Activated naive CD4-positive, alpha-beta T cell treated with anti-CD3 and anti-CD28 coated beads for 36 hours (primary cell): ENCODE measurements at regions of chr4 and their contacts with region 1.

Region 1: GRCh38 chr4:108030332-108030731 is 40.6 kb downstream of the HADH start:
- DNase-seq: peak; percentile 92
- H3K4me3 Mint-ChIP-seq: peak overlapping the region; percentile 52
- H3K27ac Mint-ChIP-seq: peak overlapping the region; percentile 97
- H3K4me1 Mint-ChIP-seq: peaks cover 70% of the 10 kb centered on the region
- H3K27me3 Mint-ChIP-seq: no peaks in the 10 kb centered on the region

Region 2: GRCh38 chr4:108053251-108053711 is 22.9 kb after region 1 on chr4:
- CTCF ChIA-PET with region 1: interaction called, 16 read pairs
- intact Hi-C with region 1: loop called (anchors 1 kb)
- DNase-seq: no peak
- H3K4me3 Mint-ChIP-seq: peak overlapping the region; percentile 34
- H3K27ac Mint-ChIP-seq: peak overlapping the region; percentile 93
- H3K4me1 Mint-ChIP-seq: peaks cover 94% of the 10 kb centered on the region
- H3K27me3 Mint-ChIP-seq: no peaks in the 10 kb centered on the region

Region 3: GRCh38 chr4:108109997-108110416 is 79.7 kb after region 1 on chr4:
- CTCF ChIA-PET with region 1: interaction called, 12 read pairs
- intact Hi-C with region 1: loop called (anchors 1 kb)
- DNase-seq: no peak
- H3K4me3 Mint-ChIP-seq: peak overlapping the region; percentile 55
- H3K27ac Mint-ChIP-seq: peak overlapping the region; percentile 96
- H3K4me1 Mint-ChIP-seq: peaks cover 96% of the 10 kb centered on the region
- H3K27me3 Mint-ChIP-seq: no peaks in the 10 kb centered on the region

Region 4: GRCh38 chr4:108160741-108161352 is 130.5 kb after region 1 on chr4:
- CTCF ChIA-PET with region 1: interaction called, 10 read pairs
- intact Hi-C with region 1: loop called (anchors 1 kb)
- DNase-seq: no peak
- H3K4me3 Mint-ChIP-seq: peak overlapping the region; percentile 57
- H3K27ac Mint-ChIP-seq: peak overlapping the region; percentile 97
- H3K4me1 Mint-ChIP-seq: peaks cover 58% of the 10 kb centered on the region
- H3K27me3 Mint-ChIP-seq: no peaks in the 10 kb centered on the region

Region 5: DNA sequence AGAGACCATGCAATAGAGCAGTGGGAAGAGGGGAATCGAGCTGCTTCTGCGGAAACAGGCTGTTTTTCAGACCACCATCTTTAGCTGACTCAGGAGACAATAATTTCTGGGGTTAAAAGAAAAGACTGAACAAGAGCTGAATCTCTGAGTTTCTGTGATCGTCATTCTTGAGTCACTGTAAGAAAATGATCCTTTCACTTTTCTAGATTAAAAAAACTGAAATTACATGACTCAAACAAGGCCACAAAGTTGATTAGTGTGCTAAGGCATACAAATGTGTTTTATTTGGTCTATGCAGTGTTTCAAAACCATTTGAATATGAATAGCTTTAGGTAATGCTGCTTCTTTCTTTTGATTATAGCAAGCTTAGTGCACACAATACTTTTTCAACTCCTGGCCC is 395.7 kb after region 1 on chr4:
- CTCF ChIA-PET with region 1: interaction called, 3 read pairs
- intact Hi-C with region 1: loop called (anchors 2 kb)
- DNase-seq: no peak
- H3K4me3 Mint-ChIP-seq: no peak overlapping the region
- H3K27ac Mint-ChIP-seq: peak overlapping the region; percentile 48
- H3K4me1 Mint-ChIP-seq: peaks cover 21% of the 10 kb centered on the region
- H3K27me3 Mint-ChIP-seq: no peaks in the 10 kb centered on the region

Region 6: GRCh38 chr4:108512615-108513505 is 482.5 kb after region 1 on chr4:
- CTCF ChIA-PET with region 1: interaction called, 12 read pairs
- intact Hi-C with region 1: loop called (anchors 1 kb)
- DNase-seq: peak; percentile 72
- H3K4me3 Mint-ChIP-seq: peak overlapping the region; percentile 75
- H3K27ac Mint-ChIP-seq: peak overlapping the region; percentile 72
- H3K4me1 Mint-ChIP-seq: peaks cover 17% of the 10 kb centered on the region
- H3K27me3 Mint-ChIP-seq: no peaks in the 10 kb centered on the region

Region 7: DNA sequence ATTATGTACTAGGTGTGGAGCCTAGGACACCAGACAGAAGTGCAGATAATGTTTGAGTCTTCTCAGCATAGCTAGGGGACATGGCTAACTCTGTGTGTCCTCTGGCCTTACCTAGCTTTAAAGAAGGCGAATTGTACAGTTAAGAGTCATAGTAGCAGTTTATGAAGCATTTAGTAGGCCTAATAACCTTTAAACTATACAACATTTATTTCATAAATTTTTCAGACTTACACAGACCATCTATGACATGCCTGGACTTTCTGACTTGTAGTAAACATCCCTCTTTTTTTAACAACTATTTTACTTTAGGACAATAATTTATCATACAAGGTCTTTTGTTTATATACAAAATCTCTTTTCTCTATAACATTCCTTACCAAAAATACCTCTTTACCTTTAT is 695.1 kb after region 1 on chr4:
- CTCF ChIA-PET with region 1: no interaction called
- intact Hi-C with region 1: no loop called
- DNase-seq: no peak
- H3K4me3 Mint-ChIP-seq: no peak overlapping the region
- H3K27ac Mint-ChIP-seq: no peak overlapping the region
- H3K4me1 Mint-ChIP-seq: no peaks in the 10 kb centered on the region
- H3K27me3 Mint-ChIP-seq: no peaks in the 10 kb centered on the region